ENCODE measurements at regions of chr11 and their contacts with region 1.

Region 1: DNA sequence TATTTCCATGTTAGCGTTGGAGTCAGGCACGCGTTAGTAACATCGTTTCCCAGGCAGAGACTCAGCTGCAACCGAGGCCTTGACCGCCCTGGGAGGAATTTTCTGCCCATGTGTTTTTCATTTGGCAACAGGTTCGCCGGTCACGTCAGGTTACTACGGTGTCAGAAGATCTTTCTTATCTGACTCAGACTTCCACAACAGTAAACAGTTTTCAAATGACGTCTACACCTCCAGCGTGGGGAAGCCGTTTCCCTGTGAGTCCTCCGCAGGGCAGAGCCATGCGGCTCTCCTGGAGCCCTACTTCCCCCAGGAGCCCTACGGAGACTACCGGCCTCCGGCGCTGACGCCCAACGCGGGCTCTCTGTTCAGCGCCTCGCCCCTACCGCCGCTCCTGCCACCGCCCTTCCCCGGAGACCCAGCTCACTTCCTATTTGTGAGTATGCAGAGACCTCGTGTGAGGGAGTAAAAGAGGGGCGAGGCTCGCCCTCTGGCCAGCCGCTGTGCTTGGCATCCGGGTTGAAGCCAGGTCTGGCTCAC is 14.3 kb upstream of the POU2AF3 start:
- DNase-seq: peak; percentile 75 to 79
- ATAC-seq: peak; percentile 75

Region 2: DNA sequence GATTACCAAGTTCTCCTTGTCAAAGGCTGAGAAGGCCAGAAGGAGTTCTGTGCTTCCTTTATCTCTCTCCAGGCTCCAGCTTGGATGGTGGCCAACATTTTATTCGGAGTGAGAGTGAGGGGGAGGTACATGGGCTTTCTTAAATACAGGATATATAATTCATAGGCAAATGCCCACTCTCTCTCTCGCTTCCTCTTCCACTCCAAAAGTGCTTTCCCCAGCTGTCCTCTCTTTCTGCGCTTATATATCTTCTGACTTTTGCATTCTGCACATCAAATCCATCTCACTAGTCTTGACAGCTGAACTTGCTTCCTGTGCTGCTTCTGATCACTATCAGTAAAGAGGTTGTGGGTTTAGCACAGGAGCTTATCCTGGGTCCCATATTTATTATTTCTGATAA is 446.4 kb before region 1 on chr11:
- intact Hi-C with region 1: no loop called
- DNase-seq: no peak
- ATAC-seq: no peak

Region 3: GRCh38 chr11:111220716-111221115 is 63.3 kb before region 1 on chr11:
- intact Hi-C with region 1: no loop called
- DNase-seq: no peak
- ATAC-seq: no peak

Region 4: GRCh38 chr11:111422494-111423249 is 138.7 kb after region 1 on chr11:
- intact Hi-C with region 1: loop called in 1 of 2 experiments (anchors 5 kb)
- DNase-seq: peak; percentile 57 to 74
- ATAC-seq: peak; percentile 88

Region 5: GRCh38 chr11:111446404-111447111 is 162.5 kb after region 1 on chr11:
- intact Hi-C with region 1: loop called in 1 of 2 experiments (anchors 5 kb)
- DNase-seq: peak; percentile 83 to 88
- ATAC-seq: peak; percentile 98

Measured in left colon (tissue), 2 donors.